Esophagus muscularis mucosa (tissue), 4 donors: ENCODE measurements at regions of chr3 and their contacts with region 1.

Region 1: DNA sequence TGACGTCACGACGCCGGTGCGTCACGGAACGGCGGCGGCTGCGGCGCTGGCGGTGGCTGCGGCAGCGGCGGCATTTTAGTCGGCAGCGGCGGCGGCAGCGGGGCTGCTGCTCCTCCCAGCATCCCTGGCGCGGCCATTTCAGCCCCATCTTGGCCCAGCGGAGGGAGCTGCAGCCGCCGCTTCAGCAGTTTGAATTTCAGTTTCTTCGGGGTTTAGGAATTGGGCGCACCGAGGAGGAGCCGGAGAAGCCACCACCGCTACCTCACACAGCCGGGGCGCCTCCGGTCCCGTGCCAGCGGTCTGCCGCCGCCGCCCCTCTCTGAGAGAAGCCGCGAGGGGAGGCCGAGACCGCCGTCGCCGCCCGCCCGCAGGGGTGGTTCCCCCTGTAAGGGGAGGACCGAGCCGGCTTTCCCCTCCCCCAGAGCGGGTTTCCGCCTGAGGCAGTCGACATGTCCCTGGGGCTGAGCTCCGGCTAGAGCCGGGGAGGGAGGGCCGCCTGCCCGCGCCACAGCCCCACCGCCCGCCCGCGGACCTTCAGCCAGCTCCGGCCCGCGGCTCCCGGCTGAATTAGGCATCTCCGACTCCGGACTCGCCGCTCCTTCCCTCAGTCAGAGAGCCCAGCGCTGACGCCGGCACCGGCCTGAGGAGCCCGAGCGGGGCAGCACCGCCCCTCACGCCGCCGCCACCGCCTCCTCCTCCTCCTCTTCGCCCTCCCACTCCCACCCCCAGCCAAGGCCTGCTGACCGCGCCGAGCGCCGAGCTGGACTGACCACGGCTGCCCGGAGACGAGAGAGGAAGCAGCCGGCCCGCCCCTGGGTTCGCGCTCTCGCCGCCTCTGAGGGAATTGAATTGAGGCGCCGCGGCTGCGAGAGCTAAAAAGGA is at the start of gene TSC22D2:
- DNase-seq: peak; percentile 98
- H3K4me3 ChIP-seq: peak within 1 kb of the TSS; percentile 67 to 93 (median 76)
- H3K27ac ChIP-seq: peak within 1 kb of the TSS; percentile 93 to 100 (median 98)
- H3K4me1 ChIP-seq: peaks cover under 1 to 35% (median 26%) of the 10 kb centered on the region in 4 donors
- H3K27me3 ChIP-seq: no peaks in the 10 kb centered on the region
- CTCF ChIP-seq: peak in 2 of 3 experiments; percentile 1 to 25
- EP300 ChIP-seq: no peak
- POLR2A ChIP-seq: peak; percentile 94
- total RNA-seq, gene TSC22D2: 19.1 to 27.1 (median 21.2) TPM

Region 2: GRCh38 chr3:150170852-150171520 is 237.5 kb before region 1 on chr3:
- intact Hi-C with region 1: no loop called
- DNase-seq: peak; percentile 72
- H3K4me3 ChIP-seq: no peak overlapping the region
- H3K27ac ChIP-seq: no peak overlapping the region
- H3K4me1 ChIP-seq: peaks cover 5 to 12% (median 9%) of the 10 kb centered on the region in 4 donors
- H3K27me3 ChIP-seq: no peaks in the 10 kb centered on the region
- CTCF ChIP-seq: no peak
- EP300 ChIP-seq: no peak
- POLR2A ChIP-seq: no peak

Region 3: GRCh38 chr3:150238998-150239619 is 169.4 kb before region 1 on chr3:
- intact Hi-C with region 1: loop called (anchors 10 kb)
- DNase-seq: no peak
- H3K4me3 ChIP-seq: no peak overlapping the region
- H3K27ac ChIP-seq: peak overlapping the region; percentile 74 to 77 (median 76)
- H3K4me1 ChIP-seq: peaks cover 26 to 71% (median 62%) of the 10 kb centered on the region in 4 donors
- H3K27me3 ChIP-seq: no peaks in the 10 kb centered on the region
- CTCF ChIP-seq: peak in 2 of 3 experiments; percentile 4 to 7
- EP300 ChIP-seq: no peak
- POLR2A ChIP-seq: no peak

Region 4: GRCh38 chr3:150371741-150372254 is 36.7 kb before region 1 on chr3:
- intact Hi-C with region 1: loop called (anchors 2 kb)
- DNase-seq: no peak
- H3K4me3 ChIP-seq: peak overlapping the region; percentile 33 to 51 (median 44)
- H3K27ac ChIP-seq: peak overlapping the region; percentile 83 to 86 (median 84)
- H3K4me1 ChIP-seq: peaks cover 30 to 35% (median 30%) of the 10 kb centered on the region in 4 donors
- H3K27me3 ChIP-seq: no peaks in the 10 kb centered on the region
- CTCF ChIP-seq: no peak
- EP300 ChIP-seq: no peak
- POLR2A ChIP-seq: peak; percentile 17

Region 5: GRCh38 chr3:150495563-150496168 is 87.2 kb after region 1 on chr3:
- intact Hi-C with region 1: loop called (anchors 2 kb)
- DNase-seq: no peak
- H3K4me3 ChIP-seq: no peak overlapping the region
- H3K27ac ChIP-seq: no peak overlapping the region
- H3K4me1 ChIP-seq: no peaks in the 10 kb centered on the region
- H3K27me3 ChIP-seq: no peaks in the 10 kb centered on the region
- CTCF ChIP-seq: peak; percentile 82 to 86 (median 84)
- EP300 ChIP-seq: no peak
- POLR2A ChIP-seq: no peak